Activated CD4-positive, alpha-beta memory T cell treated with anti-CD3 and anti-CD28 coated beads for 36 hours (primary cell): ENCODE measurements at regions of chr6 and their contacts with region 1.

Region 1: DNA sequence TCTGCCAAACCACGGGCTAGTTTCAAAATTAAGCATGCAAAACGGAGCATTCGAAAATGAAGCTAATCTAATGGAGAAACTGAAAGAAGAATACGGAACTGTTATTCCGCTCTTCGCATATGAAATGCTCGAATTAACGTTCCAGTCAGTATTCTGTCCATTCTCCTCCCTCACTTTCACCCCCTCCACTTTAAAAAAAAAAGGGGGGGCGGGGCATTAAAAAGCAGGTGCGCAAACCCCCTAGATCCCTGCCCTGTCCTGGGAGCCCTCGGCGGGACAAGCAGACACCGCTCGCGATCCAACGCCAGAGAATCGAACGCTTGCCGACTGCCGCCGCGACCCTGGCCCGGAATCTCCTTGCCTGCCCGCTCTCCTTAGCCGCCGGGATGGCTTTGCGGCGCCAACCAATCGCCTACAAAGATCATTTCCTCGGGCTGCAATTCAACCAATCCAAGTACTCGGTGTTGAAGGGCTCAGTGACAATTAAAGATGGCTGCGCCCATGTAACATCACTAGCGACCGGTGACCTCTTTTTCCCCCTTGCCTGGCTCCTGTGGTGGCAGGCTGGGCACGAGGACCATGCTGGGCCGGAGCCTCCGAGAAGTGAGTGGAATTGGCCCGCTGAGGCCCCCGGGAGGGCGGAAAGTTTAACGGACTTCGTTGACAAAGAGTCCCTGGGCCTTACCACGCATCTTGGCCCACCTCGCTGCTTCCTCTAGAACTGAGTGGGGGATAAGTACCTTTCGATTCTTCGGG is at the starts of genes QRSL1 and RTN4IP1:
- DNase-seq: peak; percentile 91
- H3K4me3 Mint-ChIP-seq: peak within 1 kb of the TSS; percentile 92
- H3K27ac Mint-ChIP-seq: peak within 1 kb of the TSS; percentile 94
- H3K4me1 Mint-ChIP-seq: peaks cover 15% of the 10 kb centered on the region
- H3K27me3 Mint-ChIP-seq: no peaks in the 10 kb centered on the region
- total RNA-seq, gene QRSL1: 13.2 to 13.9 TPM
- total RNA-seq, gene RTN4IP1: 8.0 to 8.5 TPM

Region 2: DNA sequence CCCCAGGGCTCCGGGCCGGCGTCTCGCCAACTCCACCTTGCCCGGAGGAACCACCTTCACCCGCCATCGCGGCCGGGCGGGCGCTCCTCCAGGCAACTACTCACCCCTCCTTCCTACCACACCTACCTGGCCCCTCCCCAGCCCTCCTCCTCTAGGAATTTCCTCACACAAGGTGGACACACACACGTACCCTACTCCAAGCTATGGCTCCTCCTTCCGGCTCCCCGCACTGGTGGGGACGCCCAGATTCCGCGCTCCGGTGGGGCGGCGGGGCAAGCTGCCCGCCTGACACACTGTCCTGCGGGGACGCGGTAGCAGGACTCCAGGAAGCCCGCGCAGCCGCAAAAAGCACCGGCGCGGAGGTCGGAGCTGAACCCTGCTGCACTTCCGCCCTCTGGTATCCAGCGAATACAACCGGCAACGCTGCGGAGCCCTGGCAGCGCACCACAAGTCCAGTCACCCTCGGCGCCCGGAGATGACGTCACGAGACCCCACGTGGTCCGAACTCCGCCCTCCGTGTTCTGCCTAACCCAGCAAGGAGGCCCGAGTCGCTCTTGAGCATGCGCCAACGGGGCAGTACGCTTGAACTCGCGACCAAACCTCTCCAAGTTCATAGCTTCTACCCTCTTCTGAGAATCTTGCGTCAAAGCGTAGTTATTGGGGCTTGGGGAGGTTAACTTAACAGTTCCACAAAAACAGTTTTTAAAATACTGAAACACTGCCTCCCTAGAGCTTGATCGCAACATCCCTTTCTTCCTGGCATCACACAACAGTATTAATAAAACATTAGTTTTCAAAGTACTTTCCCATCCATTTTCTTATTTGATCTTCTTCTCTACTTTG is 303.7 kb before region 1 on chr6 and contains the start of gene ATG5:
- CTCF ChIA-PET with region 1: no interaction called
- POLR2A ChIA-PET with region 1: no interaction called
- intact Hi-C with region 1: loop called (anchors 1 kb)
- DNase-seq: peak; percentile 100
- H3K4me3 Mint-ChIP-seq: peak within 1 kb of the TSS; percentile 96
- H3K27ac Mint-ChIP-seq: peak within 1 kb of the TSS; percentile 94
- H3K4me1 Mint-ChIP-seq: peaks cover 38% of the 10 kb centered on the region
- H3K27me3 Mint-ChIP-seq: peaks cover 3% of the 10 kb centered on the region
- total RNA-seq, gene ATG5: 29.2 TPM

Region 3: GRCh38 chr6:106608062-106608668 is 21.1 kb before region 1 on chr6:
- CTCF ChIA-PET with region 1: interaction called, 6 read pairs
- POLR2A ChIA-PET with region 1: no interaction called
- intact Hi-C with region 1: loop called (anchors 1 kb)
- DNase-seq: peak; percentile 14
- H3K4me3 Mint-ChIP-seq: no peak overlapping the region
- H3K27ac Mint-ChIP-seq: no peak overlapping the region
- H3K4me1 Mint-ChIP-seq: peaks cover 8% of the 10 kb centered on the region
- H3K27me3 Mint-ChIP-seq: no peaks in the 10 kb centered on the region

Region 4: GRCh38 chr6:106658469-106658868 is 29.2 kb after region 1 on chr6:
- CTCF ChIA-PET with region 1: no interaction called
- POLR2A ChIA-PET with region 1: no interaction called
- intact Hi-C with region 1: no loop called
- DNase-seq: no peak
- H3K4me3 Mint-ChIP-seq: no peak overlapping the region
- H3K27ac Mint-ChIP-seq: no peak overlapping the region
- H3K4me1 Mint-ChIP-seq: no peaks in the 10 kb centered on the region
- H3K27me3 Mint-ChIP-seq: no peaks in the 10 kb centered on the region

Region 5: DNA sequence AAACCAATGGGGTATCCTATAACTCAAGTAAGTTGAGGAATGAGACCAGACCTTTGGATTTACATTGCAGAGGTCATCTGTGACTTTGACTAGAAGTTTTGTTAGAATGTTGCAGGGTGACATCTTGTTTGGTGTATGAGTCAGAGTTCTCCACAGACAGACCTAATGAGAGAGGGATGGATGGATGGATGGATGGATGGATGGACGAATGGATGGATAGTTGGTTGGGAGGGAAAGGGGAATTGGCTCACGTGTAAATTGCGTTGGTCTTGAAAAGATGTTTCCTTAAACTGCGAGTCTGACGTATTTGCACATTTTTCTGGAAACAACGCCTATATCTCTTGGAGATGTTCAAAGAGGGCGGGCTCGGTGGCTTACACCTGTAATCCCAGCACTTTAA is 397.7 kb after region 1 on chr6:
- CTCF ChIA-PET with region 1: no interaction called
- POLR2A ChIA-PET with region 1: no interaction called
- intact Hi-C with region 1: loop called (anchors 5 kb)
- DNase-seq: no peak
- H3K4me3 Mint-ChIP-seq: no peak overlapping the region
- H3K27ac Mint-ChIP-seq: no peak overlapping the region
- H3K4me1 Mint-ChIP-seq: peaks cover 22% of the 10 kb centered on the region
- H3K27me3 Mint-ChIP-seq: no peaks in the 10 kb centered on the region